MCF 10A (cell line): ENCODE measurements at regions of chr10 and their contacts with region 1.

Region 1: DNA sequence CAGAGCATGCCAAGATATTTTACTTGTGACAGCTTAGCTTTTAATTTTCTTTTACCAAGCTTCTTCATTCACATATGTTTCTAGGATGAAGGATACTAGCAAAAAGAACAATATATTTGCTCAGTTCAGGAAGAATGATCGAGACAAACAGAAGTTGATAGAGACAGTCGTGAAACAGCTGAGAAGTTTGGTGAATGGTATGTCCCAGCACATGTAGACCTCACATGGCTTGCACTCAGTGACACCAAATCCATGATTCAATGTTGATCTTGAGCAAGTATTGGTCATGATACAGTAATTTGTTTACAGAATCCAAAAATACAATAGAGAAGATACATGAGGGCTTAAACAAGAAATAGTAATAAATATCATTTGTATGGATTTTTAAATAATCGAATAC is 2.5 kb upstream of the CYP26C1 start:
- DNase-seq: no peak
- H3K4me3 Mint-ChIP-seq: no peak overlapping the region
- H3K27ac Mint-ChIP-seq: no peak overlapping the region
- H3K4me1 Mint-ChIP-seq: no peaks in the 10 kb centered on the region
- H3K27me3 Mint-ChIP-seq: no peaks in the 10 kb centered on the region
- CTCF ChIP-seq: no peak

Region 2: GRCh38 chr10:92957223-92958010 is 100.7 kb before region 1 on chr10:
- CTCF ChIA-PET with region 1: no interaction called
- POLR2A ChIA-PET with region 1: no interaction called
- intact Hi-C with region 1: no loop called
- DNase-seq: no peak
- H3K4me3 Mint-ChIP-seq: no peak overlapping the region
- H3K27ac Mint-ChIP-seq: no peak overlapping the region
- H3K4me1 Mint-ChIP-seq: no peaks in the 10 kb centered on the region
- H3K27me3 Mint-ChIP-seq: no peaks in the 10 kb centered on the region
- CTCF ChIP-seq: no peak

Region 3: DNA sequence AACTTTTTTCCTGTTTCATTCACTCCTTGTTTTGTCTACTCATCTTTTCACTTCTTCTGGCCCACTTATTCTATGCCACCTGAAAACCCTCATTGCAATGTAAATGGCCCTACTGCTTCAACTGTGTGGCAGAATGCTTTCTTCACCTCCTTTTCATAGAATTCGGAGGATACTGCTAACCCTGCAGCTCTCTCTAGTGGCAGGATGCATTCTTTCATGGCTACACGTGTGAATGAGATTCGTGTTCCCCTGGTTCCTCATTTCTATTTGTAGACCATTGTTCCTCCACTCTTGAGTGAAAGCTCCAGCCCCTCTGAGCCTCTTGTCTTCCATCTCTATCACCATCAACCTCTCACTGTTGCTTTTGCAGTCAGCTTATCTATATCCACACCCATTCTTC is 18.4 kb before region 1 on chr10:
- CTCF ChIA-PET with region 1: interaction called, 15 read pairs
- POLR2A ChIA-PET with region 1: no interaction called
- intact Hi-C with region 1: no loop called
- DNase-seq: peak; percentile 54
- H3K4me3 Mint-ChIP-seq: no peak overlapping the region
- H3K27ac Mint-ChIP-seq: no peak overlapping the region
- H3K4me1 Mint-ChIP-seq: no peaks in the 10 kb centered on the region
- H3K27me3 Mint-ChIP-seq: no peaks in the 10 kb centered on the region
- CTCF ChIP-seq: peak; percentile 65

Region 4: DNA sequence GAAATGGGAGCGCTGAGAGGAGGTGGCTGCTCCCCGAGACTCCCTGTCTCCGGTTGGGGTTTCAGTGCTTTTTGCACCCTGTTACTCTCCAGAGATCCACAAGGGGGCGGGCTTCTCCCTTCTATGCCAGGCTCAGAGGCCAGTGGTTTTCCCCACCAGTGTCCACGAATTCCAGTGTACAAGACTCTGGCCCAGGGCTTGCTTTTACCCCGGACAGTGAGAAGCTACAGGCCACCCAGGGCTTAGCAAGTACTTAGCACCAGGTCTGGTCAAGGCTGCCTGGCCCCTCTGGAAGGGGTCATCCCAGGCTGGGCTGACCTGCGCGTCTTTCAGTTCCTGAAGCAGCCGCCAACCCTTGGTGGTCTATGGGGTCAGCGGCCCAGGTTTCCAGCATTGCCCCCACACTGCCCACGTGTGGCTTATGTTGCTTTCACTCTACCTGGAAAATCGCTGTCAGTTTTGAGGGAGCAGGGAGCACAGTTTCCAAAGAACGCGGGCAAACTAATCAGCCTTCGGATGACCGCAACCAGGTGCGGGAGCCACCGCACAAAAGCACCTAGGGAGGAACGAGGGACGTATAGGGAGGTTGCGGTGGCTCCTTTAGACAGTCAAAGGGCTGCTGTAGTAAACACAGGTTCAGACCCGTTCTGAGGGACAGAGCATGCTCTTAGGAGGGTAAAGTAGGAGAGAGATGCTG is 22.4 kb after region 1 on chr10:
- CTCF ChIA-PET with region 1: interaction called, 15 read pairs
- POLR2A ChIA-PET with region 1: interaction called, 3 read pairs
- intact Hi-C with region 1: no loop called
- DNase-seq: peak; percentile 57
- H3K4me3 Mint-ChIP-seq: peak overlapping the region; percentile 29
- H3K27ac Mint-ChIP-seq: peak overlapping the region; percentile 72
- H3K4me1 Mint-ChIP-seq: peaks cover 5% of the 10 kb centered on the region
- H3K27me3 Mint-ChIP-seq: peaks cover 17% of the 10 kb centered on the region
- CTCF ChIP-seq: peak; percentile 86